ENCODE measurements at regions of chr2 and their contacts with region 1.

Region 1: DNA sequence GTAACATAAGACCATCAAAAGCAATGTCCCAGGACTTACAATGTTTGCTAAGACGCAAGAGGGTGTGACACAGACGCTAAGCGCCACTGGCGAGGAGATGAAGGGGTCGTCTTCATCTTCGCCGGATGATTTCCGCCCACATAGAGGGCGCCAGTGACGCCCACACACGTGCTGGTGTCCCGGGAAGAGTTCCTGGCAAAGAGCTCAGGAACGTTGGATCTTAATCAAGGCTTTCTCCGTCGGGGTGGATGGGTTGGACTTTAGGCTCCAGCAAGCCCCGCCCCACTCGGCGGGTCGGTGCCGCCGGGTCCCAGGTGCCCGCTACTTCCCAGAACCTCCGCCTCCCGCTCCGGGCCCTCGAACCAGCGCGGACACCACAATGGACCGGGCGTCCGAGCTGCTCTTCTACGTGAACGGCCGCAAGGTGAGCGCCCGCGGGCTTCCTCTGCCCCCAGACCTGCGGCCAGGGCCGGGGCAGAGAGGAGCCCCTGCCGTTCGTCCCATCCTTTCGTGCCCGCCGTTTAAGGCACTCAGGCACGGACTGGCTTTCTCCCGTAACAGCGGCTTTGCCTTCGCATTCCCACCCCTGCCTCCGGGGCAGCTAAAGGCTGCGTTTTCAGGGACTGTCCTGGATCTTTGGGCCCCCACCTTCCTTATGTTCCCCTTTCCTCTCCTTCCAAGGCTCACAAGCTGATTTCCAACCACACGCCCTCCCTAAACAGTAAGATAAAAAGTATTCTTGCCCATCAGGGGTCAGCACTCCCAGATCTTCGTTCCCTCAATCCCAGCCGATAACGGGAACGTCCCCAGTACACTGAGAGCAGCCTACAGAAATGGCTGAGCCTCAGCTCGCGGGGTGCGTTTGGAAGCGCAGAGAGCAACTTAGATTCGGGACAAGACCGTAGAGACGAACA is at the start of gene AOX1:
- DNase-seq: peak; percentile 70
- ATAC-seq: peak; percentile 93
- H3K4me3 ChIP-seq: peak within 1 kb of the TSS; percentile 56 to 76 (median 57)
- H3K27ac ChIP-seq: peak within 1 kb of the TSS; percentile 39
- H3K4me1 ChIP-seq: peaks cover 37% of the 10 kb centered on the region
- H3K27me3 ChIP-seq: no peaks in the 10 kb centered on the region; a peak in 1 of 5 replicates
- CTCF ChIP-seq: peak; percentile 71
- EP300 ChIP-seq: no peak
- POLR2A ChIP-seq: peak; percentile 51 to 60
- RAD21 ChIP-seq: peak; percentile 73
- total RNA-seq, gene AOX1: 18.0 and 27.5 TPM in 2 replicates

Region 2: GRCh38 chr2:200596774-200597570 is 11.0 kb after region 1 on chr2:
- CTCF ChIA-PET with region 1: no interaction called
- POLR2A ChIA-PET with region 1: interaction called, 73 read pairs
- in situ Hi-C with region 1: no loop called
- intact Hi-C with region 1: no loop called
- DNase-seq: peak; percentile 58
- ATAC-seq: peak; percentile 95
- H3K4me3 ChIP-seq: no peak overlapping the region
- H3K27ac ChIP-seq: no peak overlapping the region
- H3K4me1 ChIP-seq: peaks cover 28% of the 10 kb centered on the region
- H3K27me3 ChIP-seq: no peaks in the 10 kb centered on the region
- CTCF ChIP-seq: no peak
- EP300 ChIP-seq: 0 out of 4 replicates have a peak, but pooled peaks of 1 of the 2 experiments have one; percentile 7
- POLR2A ChIP-seq: no peak
- RAD21 ChIP-seq: no peak

Region 3: GRCh38 chr2:200615247-200615646 is 29.3 kb after region 1 on chr2:
- CTCF ChIA-PET with region 1: no interaction called
- POLR2A ChIA-PET with region 1: interaction called, 33 read pairs
- in situ Hi-C with region 1: no loop called
- intact Hi-C with region 1: no loop called
- DNase-seq: peak; percentile 68
- ATAC-seq: peak; percentile 98
- H3K4me3 ChIP-seq: no peak overlapping the region
- H3K27ac ChIP-seq: no peak overlapping the region
- H3K4me1 ChIP-seq: peaks cover 22% of the 10 kb centered on the region
- H3K27me3 ChIP-seq: no peaks in the 10 kb centered on the region
- CTCF ChIP-seq: no peak
- EP300 ChIP-seq: no peak; a peak in 1 of 4 replicates
- POLR2A ChIP-seq: no peak
- RAD21 ChIP-seq: no peak

Region 4: GRCh38 chr2:200650195-200650594 is 64.2 kb after region 1 on chr2:
- CTCF ChIA-PET with region 1: no interaction called
- POLR2A ChIA-PET with region 1: interaction called, 58 read pairs
- in situ Hi-C with region 1: loop called (anchors 5 kb)
- intact Hi-C with region 1: no loop called
- DNase-seq: no peak
- ATAC-seq: no peak
- H3K4me3 ChIP-seq: no peak overlapping the region
- H3K27ac ChIP-seq: no peak overlapping the region
- H3K4me1 ChIP-seq: peaks cover 30% of the 10 kb centered on the region
- H3K27me3 ChIP-seq: no peaks in the 10 kb centered on the region
- CTCF ChIP-seq: no peak
- EP300 ChIP-seq: no peak
- POLR2A ChIP-seq: no peak
- RAD21 ChIP-seq: no peak

Region 5: DNA sequence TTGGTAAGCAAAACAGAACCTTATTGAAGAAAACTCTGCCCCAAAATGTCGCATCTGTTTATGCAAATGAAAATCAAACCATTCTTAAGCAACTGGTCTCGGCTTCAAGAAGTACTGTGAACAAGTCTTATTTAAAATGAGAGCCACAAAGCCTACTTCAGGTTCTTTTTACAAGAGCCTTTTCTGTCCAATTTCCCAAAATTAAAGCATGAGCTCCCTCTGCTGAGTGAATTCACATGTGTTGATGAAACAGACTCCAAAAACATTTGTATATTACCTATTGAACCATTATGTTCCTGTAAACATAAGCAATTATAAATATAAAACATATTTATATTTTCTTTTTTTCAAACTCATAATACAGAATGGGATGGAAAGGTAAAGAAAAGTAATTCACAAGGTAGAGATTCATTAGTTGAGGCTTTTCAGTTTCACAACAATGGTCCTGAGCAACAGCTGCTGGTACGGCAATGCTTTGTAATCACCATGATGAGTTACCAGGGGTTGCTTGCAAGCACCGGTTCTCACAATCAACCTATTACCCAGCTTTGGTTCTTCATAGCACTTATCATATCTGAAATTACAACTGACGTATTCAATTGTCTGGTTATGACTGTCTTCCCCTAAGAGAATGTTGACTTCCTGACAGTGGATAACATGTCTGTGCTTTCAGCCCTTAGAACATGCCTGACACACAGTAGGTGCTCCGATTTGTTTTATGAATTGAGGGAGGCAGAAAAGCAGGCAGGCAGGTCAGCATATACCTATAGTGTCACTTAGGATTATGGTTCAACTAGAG is 117.3 kb after region 1 on chr2:
- CTCF ChIA-PET with region 1: interaction called, 7 read pairs
- POLR2A ChIA-PET with region 1: interaction called, 12 read pairs
- in situ Hi-C with region 1: no loop called
- intact Hi-C with region 1: no loop called
- DNase-seq: peak; percentile 77
- ATAC-seq: peak; percentile 64
- H3K4me3 ChIP-seq: no peak overlapping the region; a peak in 1 of 6 replicates
- H3K27ac ChIP-seq: peak overlapping the region; percentile 53
- H3K4me1 ChIP-seq: peaks cover 27% of the 10 kb centered on the region
- H3K27me3 ChIP-seq: no peaks in the 10 kb centered on the region
- CTCF ChIP-seq: peak; percentile 70
- EP300 ChIP-seq: no peak
- POLR2A ChIP-seq: no peak
- RAD21 ChIP-seq: peak; percentile 73

Region 6: GRCh38 chr2:200765995-200766660 is 180.1 kb after region 1 on chr2:
- CTCF ChIA-PET with region 1: no interaction called
- POLR2A ChIA-PET with region 1: no interaction called
- in situ Hi-C with region 1: no loop called
- intact Hi-C with region 1: no loop called
- DNase-seq: no peak
- ATAC-seq: no peak
- H3K4me3 ChIP-seq: no peak overlapping the region
- H3K27ac ChIP-seq: no peak overlapping the region
- H3K4me1 ChIP-seq: peaks cover 27% of the 10 kb centered on the region
- H3K27me3 ChIP-seq: peaks cover 3 to 25% of the 10 kb centered on the region in 2 experiments; a peak in 4 of 5 replicates
- CTCF ChIP-seq: no peak
- EP300 ChIP-seq: no peak
- POLR2A ChIP-seq: no peak
- RAD21 ChIP-seq: no peak

Measured in HepG2 (cell line).